Colonic mucosa (tissue), 4 donors: ENCODE measurements at regions of chr17 and their contacts with region 1.

Region 1: DNA sequence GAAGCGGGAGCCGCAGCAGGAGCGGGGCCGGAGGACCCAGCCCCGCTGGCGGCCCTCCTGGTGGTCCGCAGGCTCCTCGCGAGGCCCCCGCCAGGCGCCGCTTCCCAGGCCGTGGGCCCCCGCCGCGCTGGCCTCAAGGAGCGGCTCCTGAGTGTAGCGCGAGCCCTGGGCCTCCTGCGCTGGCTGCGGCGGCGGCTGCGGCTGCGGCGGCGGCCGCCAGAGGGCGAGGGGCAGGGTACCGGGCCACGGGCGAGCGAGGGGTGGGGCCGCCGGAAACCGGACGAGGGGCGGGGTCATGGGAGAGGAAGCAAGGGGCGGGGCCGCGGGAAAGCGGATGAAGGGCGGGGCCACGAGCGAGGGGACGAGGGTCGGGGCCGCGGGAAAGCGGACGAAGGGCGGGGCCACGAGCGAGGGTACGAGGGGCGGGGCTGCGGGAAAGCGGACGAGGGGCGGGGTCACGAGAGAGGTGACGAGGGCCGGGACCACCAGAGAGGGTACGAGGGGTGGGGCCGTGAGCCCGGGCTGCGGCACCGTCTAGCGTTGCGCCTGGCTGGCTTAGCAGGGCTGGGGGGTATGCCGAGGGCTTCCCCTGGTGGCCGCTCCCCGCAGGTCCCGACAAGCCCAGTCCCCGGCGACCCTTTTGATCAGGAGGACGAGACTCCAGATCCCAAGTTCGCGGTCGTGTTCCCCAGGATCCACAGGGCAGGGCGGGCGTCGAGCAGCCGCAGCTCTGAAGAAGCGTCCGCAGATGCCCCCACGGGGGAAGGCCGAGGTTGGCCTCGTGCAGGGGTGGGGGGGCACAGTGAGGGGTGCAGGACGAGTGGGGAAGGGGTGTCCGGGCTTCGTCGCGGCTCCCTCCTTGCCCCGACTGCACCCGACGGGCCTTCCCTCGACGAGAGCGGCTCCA is 1.7 kb downstream of the MYO15B start:
- DNase-seq: peak; percentile 99
- H3K4me3 ChIP-seq: peak overlapping the region; percentile 49
- H3K27ac ChIP-seq: peak overlapping the region; percentile 86
- H3K4me1 ChIP-seq: peaks cover 3% of the 10 kb centered on the region
- H3K27me3 ChIP-seq: no peaks in the 10 kb centered on the region
- CTCF ChIP-seq: peak; percentile 8

Region 2: GRCh38 chr17:75428543-75429469 is 160.5 kb before region 1 on chr17:
- intact Hi-C with region 1: loop called (anchors 5 kb)
- DNase-seq: no peak
- H3K4me3 ChIP-seq: no peak overlapping the region
- H3K27ac ChIP-seq: peak overlapping the region; percentile 41
- H3K4me1 ChIP-seq: no peaks in the 10 kb centered on the region
- H3K27me3 ChIP-seq: no peaks in the 10 kb centered on the region
- CTCF ChIP-seq: no peak

Region 3: DNA sequence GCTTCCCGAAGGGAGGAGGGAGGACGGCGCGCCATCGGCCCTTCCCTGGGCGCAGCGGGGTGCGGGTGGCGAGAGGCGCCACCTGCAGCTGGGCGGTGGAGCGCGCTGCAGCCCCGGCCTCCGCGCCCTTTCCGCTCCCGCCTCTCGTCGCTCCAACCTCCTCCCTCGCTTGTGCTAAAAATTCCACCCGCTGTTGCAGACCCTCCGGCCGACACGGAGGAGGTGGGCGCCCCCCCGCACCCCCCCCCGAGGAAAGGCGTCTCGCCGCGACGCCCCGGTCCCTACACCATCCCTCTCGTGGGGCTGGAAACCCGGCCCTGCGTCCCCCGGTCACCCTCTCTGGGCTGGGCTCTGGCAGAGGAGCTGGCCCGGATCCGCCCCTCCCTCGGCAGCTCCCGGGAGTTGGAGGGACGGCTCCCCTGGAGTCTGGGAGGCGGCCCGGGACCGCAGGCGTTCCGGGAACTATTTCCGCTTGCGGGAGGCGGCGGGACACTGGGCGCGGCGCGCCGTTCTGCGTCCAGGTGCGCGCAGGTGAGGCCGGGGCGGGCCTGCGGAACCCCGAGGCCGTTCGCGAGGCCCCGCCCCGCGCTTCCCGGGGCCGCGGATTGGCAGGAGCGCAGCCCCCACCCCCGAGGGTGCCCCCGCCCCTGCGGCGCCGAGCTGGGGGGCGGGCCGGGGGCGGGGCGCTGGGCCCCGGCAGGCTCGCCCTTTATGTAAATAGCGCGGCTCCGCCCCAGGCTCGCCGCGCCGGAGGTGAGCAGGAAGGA is 64.1 kb before region 1 on chr17 and contains the start of gene LLGL2:
- intact Hi-C with region 1: loop called (anchors 10 kb)
- DNase-seq: peak; percentile 94
- H3K4me3 ChIP-seq: peak within 1 kb of the TSS; percentile 82
- H3K27ac ChIP-seq: peak within 1 kb of the TSS; percentile 96
- H3K4me1 ChIP-seq: peaks cover 10% of the 10 kb centered on the region
- H3K27me3 ChIP-seq: no peaks in the 10 kb centered on the region
- CTCF ChIP-seq: peak; percentile 32
- total RNA-seq, gene LLGL2: 401 to 497 TPM